PC-9 (cell line): ENCODE measurements at regions of chr19 and their contacts with region 1.

Region 1: DNA sequence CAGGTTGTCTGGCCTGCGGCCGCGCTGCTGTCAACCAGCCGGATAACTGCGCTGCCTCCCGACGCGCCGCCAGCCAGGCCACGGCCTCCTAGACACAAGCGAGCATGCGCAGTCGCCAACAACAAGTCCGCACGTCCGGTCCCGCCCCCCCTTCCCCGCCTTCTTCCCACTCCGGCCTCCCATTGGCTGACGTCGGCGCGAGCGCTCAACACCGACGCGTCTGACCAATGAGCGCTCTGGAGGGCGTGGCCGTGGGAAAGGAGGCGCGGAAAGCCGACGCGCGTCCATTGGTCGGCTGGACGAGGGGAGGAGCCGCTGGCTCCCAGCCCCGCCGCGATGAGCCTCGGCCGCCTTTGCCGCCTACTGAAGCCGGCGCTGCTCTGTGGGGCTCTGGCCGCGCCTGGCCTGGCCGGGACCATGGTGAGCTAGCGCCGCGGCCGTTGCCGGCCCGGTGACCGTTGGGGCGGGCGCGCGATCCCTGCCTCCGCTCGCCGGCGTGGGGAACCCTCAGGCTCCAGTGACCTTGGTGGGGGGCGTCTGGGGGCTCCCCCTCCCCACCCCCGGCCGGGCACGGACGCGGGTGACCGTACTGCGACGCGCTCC is at the start of gene GPX4:
- DNase-seq: peak; percentile 93 to 96
- H3K4me3 ChIP-seq: peak within 1 kb of the TSS; percentile 78
- H3K27ac ChIP-seq: peak within 1 kb of the TSS; percentile 97
- H3K4me1 ChIP-seq: peaks cover 72% of the 10 kb centered on the region
- H3K27me3 ChIP-seq: no peaks in the 10 kb centered on the region
- CTCF ChIP-seq: no peak
- total RNA-seq, gene GPX4: 465 and 489 TPM in 2 replicates

Region 2: GRCh38 chr19:677201-677600 is 426.6 kb before region 1 on chr19:
- CTCF ChIA-PET with region 1: no interaction called
- POLR2A ChIA-PET with region 1: interaction called, 16 read pairs
- intact Hi-C with region 1: no loop called
- DNase-seq: peak; percentile 70 to 92
- H3K4me3 ChIP-seq: peak overlapping the region; percentile 72
- H3K27ac ChIP-seq: peak overlapping the region; percentile 43; the same call in 1 of the 2 replicates
- H3K4me1 ChIP-seq: peaks cover 30% of the 10 kb centered on the region
- H3K27me3 ChIP-seq: no peaks in the 10 kb centered on the region
- CTCF ChIP-seq: no peak

Region 3: GRCh38 chr19:1020868-1021425 is 82.9 kb before region 1 on chr19 and contains the start of gene TMEM259:
- CTCF ChIA-PET with region 1: no interaction called
- POLR2A ChIA-PET with region 1: interaction called, 3 read pairs
- intact Hi-C with region 1: loop called (anchors 2 kb)
- DNase-seq: peak; percentile 82 to 97
- H3K4me3 ChIP-seq: peak within 1 kb of the TSS; percentile 86
- H3K27ac ChIP-seq: peak within 1 kb of the TSS; percentile 77
- H3K4me1 ChIP-seq: peaks cover 37% of the 10 kb centered on the region
- H3K27me3 ChIP-seq: no peaks in the 10 kb centered on the region
- CTCF ChIP-seq: no peak
- total RNA-seq, gene TMEM259: 155 and 162 TPM in 2 replicates

Region 4: GRCh38 chr19:1047696-1048147 is 56.1 kb before region 1 on chr19:
- CTCF ChIA-PET with region 1: interaction called, 4 read pairs
- POLR2A ChIA-PET with region 1: interaction called, 14 read pairs
- intact Hi-C with region 1: no loop called
- DNase-seq: no peak
- H3K4me3 ChIP-seq: no peak overlapping the region
- H3K27ac ChIP-seq: no peak overlapping the region
- H3K4me1 ChIP-seq: no peaks in the 10 kb centered on the region
- H3K27me3 ChIP-seq: no peaks in the 10 kb centered on the region
- CTCF ChIP-seq: no peak

Region 5: GRCh38 chr19:1151917-1152617 is 48.3 kb after region 1 on chr19:
- CTCF ChIA-PET with region 1: no interaction called
- POLR2A ChIA-PET with region 1: interaction called, 17 read pairs
- intact Hi-C with region 1: no loop called
- DNase-seq: no peak
- H3K4me3 ChIP-seq: no peak overlapping the region
- H3K27ac ChIP-seq: no peak overlapping the region
- H3K4me1 ChIP-seq: peaks cover 19% of the 10 kb centered on the region
- H3K27me3 ChIP-seq: no peaks in the 10 kb centered on the region
- CTCF ChIP-seq: no peak

Region 6: DNA sequence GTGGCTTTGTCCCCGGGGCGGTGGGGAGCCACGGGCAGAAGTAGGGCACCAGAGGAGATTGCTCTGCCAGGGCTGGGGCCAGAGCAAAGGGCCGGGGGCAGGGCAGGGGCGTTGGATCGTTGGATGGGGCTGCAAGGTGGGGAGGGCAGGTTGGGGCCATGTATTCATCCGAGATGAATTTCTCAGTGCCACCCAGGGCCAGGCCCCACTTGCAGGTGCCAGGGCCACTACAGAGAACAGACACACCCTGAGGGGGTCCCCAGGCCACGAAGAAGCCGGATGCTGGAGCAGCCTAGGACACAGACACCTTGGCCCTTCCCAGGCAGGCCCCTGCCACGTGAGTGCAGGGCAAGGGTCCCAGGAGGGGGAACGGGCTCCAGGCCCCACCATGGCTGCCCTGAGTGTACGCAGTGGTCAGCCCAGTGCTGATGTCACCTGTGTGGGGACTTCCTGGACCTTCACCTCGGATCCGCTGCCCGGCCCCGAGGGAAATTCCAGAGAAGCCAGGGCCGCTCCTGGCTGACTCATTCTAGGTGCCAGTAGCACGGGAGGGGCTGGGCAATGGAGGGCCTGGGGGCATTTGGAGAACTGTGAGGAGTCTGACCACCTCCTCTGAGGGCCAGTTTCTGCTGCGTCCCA is 79.8 kb after region 1 on chr19:
- CTCF ChIA-PET with region 1: no interaction called
- POLR2A ChIA-PET with region 1: no interaction called
- intact Hi-C with region 1: loop called (anchors 5 kb)
- DNase-seq: peak; percentile 93 to 95
- H3K4me3 ChIP-seq: peak overlapping the region; percentile 8; the same call in 1 of the 2 replicates
- H3K27ac ChIP-seq: peak overlapping the region; percentile 95
- H3K4me1 ChIP-seq: peaks cover 57% of the 10 kb centered on the region
- H3K27me3 ChIP-seq: no peaks in the 10 kb centered on the region
- CTCF ChIP-seq: no peak

Region 7: DNA sequence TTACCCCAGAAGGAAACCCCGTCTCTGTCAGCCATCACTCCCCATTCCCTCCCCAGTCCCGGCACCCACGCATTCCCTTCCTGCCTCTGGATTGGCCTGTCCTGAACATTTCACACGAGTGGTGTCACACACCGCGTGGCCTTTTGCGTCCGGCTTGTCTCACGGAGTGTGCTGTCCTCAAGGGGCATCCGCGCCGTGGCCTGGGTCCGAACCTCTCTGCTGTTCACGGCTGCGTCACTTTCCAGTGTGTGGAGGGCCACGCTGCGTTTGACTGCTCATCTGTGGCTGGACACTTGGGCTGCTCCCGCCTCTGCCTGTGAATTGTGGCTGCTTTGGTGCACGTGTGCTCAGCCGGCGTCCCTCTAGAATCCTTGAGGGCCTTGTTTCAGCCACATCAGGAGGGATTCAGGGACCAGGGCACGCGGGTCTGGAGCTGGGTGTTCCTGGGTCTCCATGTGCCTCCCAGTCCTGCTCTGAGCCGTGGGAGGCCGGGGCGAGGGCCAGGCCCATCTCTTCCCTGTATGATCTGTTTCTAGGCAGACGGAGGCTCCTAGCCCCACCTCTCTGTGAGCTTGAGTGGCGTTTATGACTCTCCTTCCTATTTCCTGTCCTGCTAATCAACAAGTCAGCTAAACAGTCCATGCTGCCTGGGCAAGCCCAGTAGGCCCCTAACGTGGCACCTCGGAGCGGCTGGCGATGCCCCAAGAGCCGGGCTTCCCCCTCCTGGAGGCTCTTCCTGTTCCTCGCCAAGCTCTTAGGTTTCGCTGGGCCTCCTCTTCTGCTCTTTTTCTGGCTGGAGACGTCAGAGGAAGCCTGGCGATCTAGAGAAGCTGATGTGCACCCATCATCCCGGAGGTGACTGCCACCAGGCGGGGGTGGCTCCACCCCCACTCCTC is 109.8 kb after region 1 on chr19:
- CTCF ChIA-PET with region 1: no interaction called
- POLR2A ChIA-PET with region 1: no interaction called
- intact Hi-C with region 1: no loop called
- DNase-seq: no peak
- H3K4me3 ChIP-seq: no peak overlapping the region
- H3K27ac ChIP-seq: no peak overlapping the region
- H3K4me1 ChIP-seq: peaks cover 31% of the 10 kb centered on the region
- H3K27me3 ChIP-seq: no peaks in the 10 kb centered on the region
- CTCF ChIP-seq: no peak